GM12878 (cell line): ENCODE measurements at regions of chr5 and their contacts with region 1.

Region 1: GRCh38 chr5:149852641-149853330 is 91.8 kb downstream of the PDE6A start:
- DNase-seq: no peak
- ATAC-seq: peak; percentile 96
- H3K4me3 ChIP-seq: no peak overlapping the region
- H3K27ac ChIP-seq: no peak overlapping the region
- H3K4me1 ChIP-seq: no peaks in the 10 kb centered on the region
- H3K27me3 ChIP-seq: no peaks in the 10 kb centered on the region
- CTCF ChIP-seq: peak; percentile 83 to 93 (median 87)
- EP300 ChIP-seq: no peak
- POLR2A ChIP-seq: no peak
- RAD21 ChIP-seq: peak; percentile 83

Region 2: GRCh38 chr5:149656576-149657182 is 196.1 kb before region 1 on chr5:
- CTCF ChIA-PET with region 1: interaction called, 17 read pairs
- POLR2A ChIA-PET with region 1: no interaction called
- RAD21 ChIA-PET with region 1: interaction called, 26 read pairs
- SMC1A ChIA-PET with region 1: interaction called, 9 read pairs
- in situ Hi-C with region 1: no loop called
- intact Hi-C with region 1: no loop called
- DNase-seq: no peak
- ATAC-seq: peak; percentile 73
- H3K4me3 ChIP-seq: no peak overlapping the region
- H3K27ac ChIP-seq: no peak overlapping the region
- H3K4me1 ChIP-seq: no peaks in the 10 kb centered on the region
- H3K27me3 ChIP-seq: no peaks in the 10 kb centered on the region; a peak in 1 of 4 replicates
- CTCF ChIP-seq: peak; percentile 72 to 83 (median 76)
- EP300 ChIP-seq: no peak
- POLR2A ChIP-seq: no peak
- RAD21 ChIP-seq: peak; percentile 69

Region 3: GRCh38 chr5:149841851-149842793 is 10.7 kb before region 1 on chr5:
- CTCF ChIA-PET with region 1: interaction called, 462 read pairs
- POLR2A ChIA-PET with region 1: interaction called, 3 read pairs
- RAD21 ChIA-PET with region 1: interaction called, 137 read pairs
- SMC1A ChIA-PET with region 1: interaction called, 81 read pairs
- in situ Hi-C with region 1: no loop called
- intact Hi-C with region 1: no loop called
- DNase-seq: no peak
- ATAC-seq: no peak
- H3K4me3 ChIP-seq: no peak overlapping the region
- H3K27ac ChIP-seq: no peak overlapping the region
- H3K4me1 ChIP-seq: no peaks in the 10 kb centered on the region
- H3K27me3 ChIP-seq: no peaks in the 10 kb centered on the region
- CTCF ChIP-seq: no peak
- EP300 ChIP-seq: no peak
- POLR2A ChIP-seq: no peak
- RAD21 ChIP-seq: no peak

Region 4: DNA sequence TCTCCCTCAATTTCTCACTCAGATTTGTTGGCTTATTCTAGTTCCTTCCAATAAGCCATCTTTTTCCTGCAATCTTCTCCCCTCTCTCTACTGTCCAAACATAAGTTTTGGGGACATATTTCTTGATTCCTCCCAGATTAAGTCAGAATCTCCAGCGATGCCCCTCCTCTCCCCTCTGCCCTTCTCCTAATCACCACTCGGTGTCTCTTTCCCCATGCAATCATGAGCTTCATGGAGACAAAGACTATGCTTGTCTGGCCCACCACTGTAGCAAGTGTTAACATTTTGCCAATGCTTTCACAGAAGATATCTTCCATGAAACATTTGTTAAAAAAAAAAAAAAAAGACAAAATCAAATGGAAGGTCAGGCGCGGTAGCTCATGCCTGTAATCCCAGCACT is 49.4 kb after region 1 on chr5:
- CTCF ChIA-PET with region 1: no interaction called
- POLR2A ChIA-PET with region 1: no interaction called
- RAD21 ChIA-PET with region 1: no interaction called
- SMC1A ChIA-PET with region 1: no interaction called
- in situ Hi-C with region 1: no loop called
- intact Hi-C with region 1: no loop called
- DNase-seq: no peak
- ATAC-seq: no peak
- H3K4me3 ChIP-seq: no peak overlapping the region
- H3K27ac ChIP-seq: no peak overlapping the region
- H3K4me1 ChIP-seq: no peaks in the 10 kb centered on the region
- H3K27me3 ChIP-seq: peaks cover 0 to under 1% of the 10 kb centered on the region in 2 experiments; a peak in 1 of 4 replicates
- CTCF ChIP-seq: no peak
- EP300 ChIP-seq: no peak
- POLR2A ChIP-seq: no peak
- RAD21 ChIP-seq: no peak

Region 5: DNA sequence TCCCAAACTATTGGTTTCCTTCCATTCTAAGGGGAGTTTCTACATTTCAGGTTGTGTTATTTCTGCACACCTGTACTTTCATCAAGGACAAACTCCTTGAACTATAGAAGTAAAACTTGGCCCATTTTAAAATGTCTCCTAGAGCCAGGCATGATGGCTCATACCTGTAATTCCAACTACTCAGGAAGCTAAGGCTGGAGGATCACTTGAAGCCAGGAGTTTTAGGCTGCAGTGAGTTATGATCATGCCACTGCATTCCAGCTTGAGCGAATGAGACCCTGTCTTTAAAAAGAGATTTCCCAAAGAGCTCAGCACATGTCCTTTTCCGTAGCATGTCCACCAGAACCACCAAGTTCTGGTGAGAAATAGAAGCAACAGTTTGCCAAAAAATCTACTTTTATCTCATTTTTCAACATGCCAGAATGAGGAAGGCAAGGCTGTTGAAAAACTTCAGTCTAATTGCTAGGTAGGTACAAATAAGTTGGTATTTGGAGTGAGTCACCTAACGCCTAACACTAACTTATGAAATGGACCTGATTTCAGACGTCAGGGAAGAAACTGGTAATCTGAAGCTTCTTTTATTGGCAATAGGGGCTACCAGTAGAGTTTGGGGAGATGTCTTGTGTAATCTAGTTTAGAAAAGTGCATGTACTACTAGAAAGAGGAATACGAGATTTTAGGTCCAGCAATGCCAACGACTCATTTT is 96.0 kb after region 1 on chr5:
- CTCF ChIA-PET with region 1: no interaction called
- POLR2A ChIA-PET with region 1: no interaction called
- RAD21 ChIA-PET with region 1: no interaction called
- SMC1A ChIA-PET with region 1: no interaction called
- in situ Hi-C with region 1: no loop called
- intact Hi-C with region 1: no loop called
- DNase-seq: no peak
- ATAC-seq: no peak
- H3K4me3 ChIP-seq: no peak overlapping the region
- H3K27ac ChIP-seq: no peak overlapping the region
- H3K4me1 ChIP-seq: no peaks in the 10 kb centered on the region
- H3K27me3 ChIP-seq: no peaks in the 10 kb centered on the region; a peak in 2 of 4 replicates
- CTCF ChIP-seq: no peak
- EP300 ChIP-seq: no peak
- POLR2A ChIP-seq: no peak
- RAD21 ChIP-seq: no peak

Region 6: DNA sequence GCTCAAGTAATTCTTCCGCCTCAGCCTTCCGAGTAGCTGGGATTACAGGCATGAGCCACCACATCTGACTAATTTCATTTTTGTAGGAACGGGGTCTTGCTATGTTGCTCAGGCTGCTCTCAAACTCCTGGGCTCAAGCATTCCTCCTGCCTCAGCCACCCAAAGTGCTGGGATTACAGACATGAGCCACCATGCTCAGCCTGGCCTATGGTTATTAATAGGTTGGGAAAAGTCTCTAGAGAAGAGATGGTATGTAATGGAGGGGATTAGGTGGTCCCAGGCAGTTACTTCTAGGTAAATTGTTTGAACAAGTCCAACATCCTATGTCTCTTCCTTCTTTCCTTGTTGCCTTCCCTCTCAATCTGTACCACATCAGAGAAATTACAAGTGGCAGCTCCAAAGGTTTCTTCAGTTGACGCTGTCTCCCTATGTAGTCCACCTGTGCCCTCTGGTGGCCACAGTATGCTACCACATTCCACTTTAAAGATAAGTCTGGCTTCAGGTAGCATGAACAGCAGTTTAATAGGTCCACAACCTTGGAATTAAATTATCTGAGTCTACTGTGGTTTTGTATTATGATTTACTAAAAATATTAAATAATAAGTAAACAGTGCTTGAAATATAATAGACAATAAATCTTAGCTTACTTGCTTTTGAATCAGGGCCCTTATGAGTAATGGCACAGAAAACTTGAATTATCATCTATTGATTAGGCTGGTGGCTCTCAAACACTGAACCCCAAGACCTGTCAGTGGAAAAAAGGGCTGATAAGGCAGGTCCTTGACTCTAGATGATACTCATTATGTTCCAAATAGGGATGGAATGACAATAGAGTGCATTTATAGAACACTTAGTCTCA is 138.0 kb after region 1 on chr5:
- CTCF ChIA-PET with region 1: interaction called, 58 read pairs
- POLR2A ChIA-PET with region 1: interaction called, 3 read pairs
- RAD21 ChIA-PET with region 1: interaction called, 19 read pairs
- SMC1A ChIA-PET with region 1: interaction called, 25 read pairs
- in situ Hi-C with region 1: no loop called
- intact Hi-C with region 1: loop called (anchors 5 kb)
- DNase-seq: peak; percentile 26
- ATAC-seq: peak; percentile 95
- H3K4me3 ChIP-seq: no peak overlapping the region
- H3K27ac ChIP-seq: no peak overlapping the region
- H3K4me1 ChIP-seq: no peaks in the 10 kb centered on the region
- H3K27me3 ChIP-seq: no peaks in the 10 kb centered on the region
- CTCF ChIP-seq: peak; percentile 86 to 96 (median 92); a peak in 5 of 6 replicates
- EP300 ChIP-seq: no peak
- POLR2A ChIP-seq: no peak
- RAD21 ChIP-seq: peak; percentile 99

Region 7: DNA sequence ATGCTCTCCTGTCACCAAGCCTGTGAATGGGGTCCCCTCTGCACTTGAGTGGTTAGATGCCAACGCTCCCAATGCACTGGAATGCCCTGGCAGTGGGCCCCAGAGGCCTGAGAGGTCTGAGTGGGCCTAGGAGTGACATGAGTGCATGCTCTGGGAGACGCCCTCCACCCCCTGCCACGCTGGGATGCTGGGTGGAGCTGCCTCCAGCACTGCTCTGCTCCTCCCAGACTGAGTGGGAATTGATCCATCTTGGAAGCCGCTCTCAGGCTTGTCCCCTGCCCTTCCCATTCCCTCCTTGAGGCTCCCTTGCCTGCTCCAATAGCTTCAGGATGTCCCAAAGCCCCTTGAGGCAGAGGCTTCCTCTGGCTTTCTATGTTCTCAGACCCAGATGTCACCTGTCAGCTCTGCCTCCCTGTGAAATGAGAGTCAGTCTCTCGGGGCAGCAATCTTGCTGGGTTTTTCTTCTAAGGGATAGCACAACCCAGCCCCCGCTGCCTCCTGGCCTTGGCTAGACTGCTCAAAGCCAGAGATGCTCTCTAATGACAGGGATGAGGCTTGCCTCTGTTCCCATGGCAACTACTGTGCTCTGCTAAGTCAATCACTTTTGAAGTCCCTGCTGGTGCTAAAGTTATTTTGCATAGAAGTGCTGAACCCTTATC is 456.6 kb after region 1 on chr5:
- CTCF ChIA-PET with region 1: no interaction called
- POLR2A ChIA-PET with region 1: no interaction called
- RAD21 ChIA-PET with region 1: no interaction called
- SMC1A ChIA-PET with region 1: no interaction called
- in situ Hi-C with region 1: no loop called
- intact Hi-C with region 1: no loop called
- DNase-seq: no peak
- ATAC-seq: peak; percentile 44; the same call in 2 of the 3 replicates
- H3K4me3 ChIP-seq: no peak overlapping the region
- H3K27ac ChIP-seq: no peak overlapping the region
- H3K4me1 ChIP-seq: no peaks in the 10 kb centered on the region
- H3K27me3 ChIP-seq: peaks cover 0 to 4% of the 10 kb centered on the region in 2 experiments; a peak in 3 of 4 replicates
- CTCF ChIP-seq: no peak
- EP300 ChIP-seq: no peak
- POLR2A ChIP-seq: no peak
- RAD21 ChIP-seq: no peak